Activated B cell treated with CpG ODN at 0.5 μM for 24 hours (primary cell): ENCODE measurements at regions of chr16 and their contacts with region 1.

Region 1: GRCh38 chr16:56317998-56318826 is 107.1 kb downstream of the AMFR start:
- DNase-seq: peak; percentile 66
- ATAC-seq: peak; percentile 99
- H3K4me3 Mint-ChIP-seq: peak overlapping the region; percentile 52
- H3K27ac Mint-ChIP-seq: no peak overlapping the region
- H3K4me1 Mint-ChIP-seq: peaks cover 15% of the 10 kb centered on the region
- H3K27me3 Mint-ChIP-seq: peaks cover 4% of the 10 kb centered on the region
- CTCF ChIP-seq: peak; percentile 39

Region 2: GRCh38 chr16:55711959-55712876 is 606.0 kb before region 1 on chr16:
- CTCF ChIA-PET with region 1: interaction called, 4 read pairs
- POLR2A ChIA-PET with region 1: no interaction called
- intact Hi-C with region 1: loop called (anchors 1 kb)
- DNase-seq: no peak
- ATAC-seq: peak; percentile 40
- H3K4me3 Mint-ChIP-seq: no peak overlapping the region
- H3K27ac Mint-ChIP-seq: no peak overlapping the region
- H3K4me1 Mint-ChIP-seq: no peaks in the 10 kb centered on the region
- H3K27me3 Mint-ChIP-seq: peaks cover 18% of the 10 kb centered on the region
- CTCF ChIP-seq: peak; percentile 67

Region 3: GRCh38 chr16:55944377-55944802 is 373.8 kb before region 1 on chr16:
- CTCF ChIA-PET with region 1: interaction called, 62 read pairs
- POLR2A ChIA-PET with region 1: no interaction called
- intact Hi-C with region 1: loop called (anchors 1 kb)
- DNase-seq: peak; percentile 34
- ATAC-seq: no peak
- H3K4me3 Mint-ChIP-seq: no peak overlapping the region
- H3K27ac Mint-ChIP-seq: no peak overlapping the region
- H3K4me1 Mint-ChIP-seq: peaks cover 5% of the 10 kb centered on the region
- H3K27me3 Mint-ChIP-seq: peaks cover 22% of the 10 kb centered on the region
- CTCF ChIP-seq: peak; percentile 70

Region 4: GRCh38 chr16:56041686-56042085 is 276.5 kb before region 1 on chr16:
- CTCF ChIA-PET with region 1: interaction called, 7 read pairs
- POLR2A ChIA-PET with region 1: interaction called, 3 read pairs
- intact Hi-C with region 1: loop called (anchors 1 kb)
- DNase-seq: no peak
- ATAC-seq: peak; percentile 56
- H3K4me3 Mint-ChIP-seq: no peak overlapping the region
- H3K27ac Mint-ChIP-seq: no peak overlapping the region
- H3K4me1 Mint-ChIP-seq: no peaks in the 10 kb centered on the region
- H3K27me3 Mint-ChIP-seq: peaks cover 9% of the 10 kb centered on the region
- CTCF ChIP-seq: no peak

Region 5: DNA sequence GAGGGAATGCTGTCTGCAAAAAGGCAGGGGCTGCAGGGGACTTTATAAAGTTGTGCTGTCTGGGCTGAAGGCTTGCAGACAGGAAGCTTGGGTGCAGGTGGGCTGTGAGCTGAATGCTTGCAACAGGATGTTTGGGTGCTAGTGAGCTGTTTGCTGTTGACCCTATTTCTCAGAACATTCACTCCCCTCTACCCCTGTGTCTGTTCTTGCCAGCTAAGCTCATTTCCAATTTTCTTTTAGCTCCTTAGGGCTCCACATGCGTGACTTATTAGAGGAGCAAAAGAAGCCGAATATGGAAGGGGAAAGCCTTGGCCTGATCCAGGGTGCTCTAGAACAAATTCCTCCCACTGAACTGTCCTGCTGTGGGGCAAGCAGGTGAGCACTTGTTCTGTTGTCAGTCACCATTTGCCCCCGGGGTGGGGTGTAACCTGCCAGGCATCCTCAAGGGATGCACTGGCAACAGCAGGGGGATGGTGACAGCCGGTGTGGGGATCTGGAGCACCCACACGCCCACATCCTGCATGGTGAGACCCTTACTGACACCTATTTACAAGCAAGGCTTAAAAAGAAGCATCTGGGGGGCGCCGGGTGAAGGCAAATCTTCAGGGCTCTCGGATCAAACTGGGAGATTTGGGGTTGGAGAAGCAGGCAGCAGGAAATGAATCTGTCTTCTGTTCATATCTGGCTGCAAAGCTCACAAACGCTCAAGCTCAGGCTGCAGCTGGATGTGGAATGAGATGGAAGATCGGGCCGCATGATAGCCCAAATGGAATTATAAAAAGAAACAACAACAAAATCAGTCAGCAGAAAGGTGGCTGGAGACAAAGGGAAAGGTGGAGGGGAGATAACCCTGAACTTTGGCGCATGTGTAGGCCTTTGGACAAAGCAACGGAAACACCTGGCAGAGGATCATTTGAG is 390.6 kb after region 1 on chr16:
- CTCF ChIA-PET with region 1: no interaction called
- POLR2A ChIA-PET with region 1: no interaction called
- intact Hi-C with region 1: loop called (anchors 10 kb)
- DNase-seq: no peak
- ATAC-seq: no peak
- H3K4me3 Mint-ChIP-seq: no peak overlapping the region
- H3K27ac Mint-ChIP-seq: no peak overlapping the region
- H3K4me1 Mint-ChIP-seq: no peaks in the 10 kb centered on the region
- H3K27me3 Mint-ChIP-seq: peaks cover 4% of the 10 kb centered on the region
- CTCF ChIP-seq: no peak